Posterior vena cava (tissue), 2 donors: ENCODE measurements at regions of chr9 and their contacts with region 1.

Region 1: DNA sequence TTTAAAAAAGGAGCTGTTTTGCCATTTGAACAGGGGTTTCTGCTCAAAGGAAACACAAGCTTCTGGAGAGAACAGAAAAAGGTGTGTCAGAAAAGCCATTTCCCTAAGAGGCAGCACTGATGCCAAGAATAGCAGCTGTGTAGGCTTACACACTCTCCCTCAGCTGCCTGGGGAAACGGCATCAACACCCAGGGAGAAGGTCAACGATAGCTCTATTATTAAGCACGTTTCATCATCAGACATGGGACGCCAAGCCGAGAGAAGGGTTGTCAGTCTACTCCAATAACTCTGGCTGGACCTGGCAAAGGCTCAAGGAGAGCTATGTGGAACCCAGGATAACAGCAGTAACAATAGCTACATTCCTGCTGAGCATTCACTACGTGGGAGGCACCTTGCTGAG is 314.2 kb downstream of the CDK5RAP2 start:
- DNase-seq: no peak

Region 2: GRCh38 chr9:120299785-120300184 is 34.0 kb after region 1 on chr9:
- intact Hi-C with region 1: no loop called
- DNase-seq: no peak

Region 3: DNA sequence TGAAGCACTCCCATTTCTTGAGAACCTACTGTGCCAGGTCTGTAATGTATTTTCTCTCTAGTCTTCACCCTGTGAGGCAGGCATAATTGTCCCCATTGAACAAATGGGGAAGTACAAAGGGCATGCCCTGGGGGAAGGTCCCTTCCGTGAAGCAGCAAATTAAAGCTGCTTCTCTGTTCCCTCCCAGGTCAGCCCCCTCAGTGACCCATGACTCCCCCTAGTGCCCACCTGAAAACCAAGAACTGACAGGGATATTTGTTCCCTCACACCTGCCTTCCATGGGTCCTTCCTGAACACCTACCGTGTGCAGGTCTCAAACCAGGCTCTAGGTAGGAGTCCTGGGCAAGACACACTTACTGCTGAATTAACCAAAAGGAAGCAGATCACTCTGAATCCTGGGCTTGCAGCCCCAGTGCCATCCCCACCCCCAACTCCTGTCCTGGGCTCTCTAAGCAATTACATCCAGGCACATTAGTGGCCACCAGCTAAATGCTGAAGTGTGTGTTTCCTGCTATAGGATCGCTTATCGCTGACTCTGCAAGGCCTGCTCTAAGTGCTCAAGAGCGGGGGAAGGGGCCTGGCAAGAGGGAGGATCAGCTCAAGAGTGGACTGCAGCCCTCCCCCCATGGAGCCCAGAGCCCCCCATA is 59.3 kb after region 1 on chr9:
- intact Hi-C with region 1: loop called in 1 of 2 experiments (anchors 10 kb)
- DNase-seq: no peak